Cardiac septum (tissue), 1 donor: ENCODE measurements at regions of chr6 and their contacts with region 1.

Region 1: GRCh38 chr6:142845624-142846458 is 99.1 kb downstream of the HIVEP2 start:
- DNase-seq: peak; percentile 93

Region 2: GRCh38 chr6:142871910-142872331 is 26.1 kb after region 1 on chr6:
- intact Hi-C with region 1: loop called (anchors 2 kb)
- DNase-seq: no peak

Region 3: DNA sequence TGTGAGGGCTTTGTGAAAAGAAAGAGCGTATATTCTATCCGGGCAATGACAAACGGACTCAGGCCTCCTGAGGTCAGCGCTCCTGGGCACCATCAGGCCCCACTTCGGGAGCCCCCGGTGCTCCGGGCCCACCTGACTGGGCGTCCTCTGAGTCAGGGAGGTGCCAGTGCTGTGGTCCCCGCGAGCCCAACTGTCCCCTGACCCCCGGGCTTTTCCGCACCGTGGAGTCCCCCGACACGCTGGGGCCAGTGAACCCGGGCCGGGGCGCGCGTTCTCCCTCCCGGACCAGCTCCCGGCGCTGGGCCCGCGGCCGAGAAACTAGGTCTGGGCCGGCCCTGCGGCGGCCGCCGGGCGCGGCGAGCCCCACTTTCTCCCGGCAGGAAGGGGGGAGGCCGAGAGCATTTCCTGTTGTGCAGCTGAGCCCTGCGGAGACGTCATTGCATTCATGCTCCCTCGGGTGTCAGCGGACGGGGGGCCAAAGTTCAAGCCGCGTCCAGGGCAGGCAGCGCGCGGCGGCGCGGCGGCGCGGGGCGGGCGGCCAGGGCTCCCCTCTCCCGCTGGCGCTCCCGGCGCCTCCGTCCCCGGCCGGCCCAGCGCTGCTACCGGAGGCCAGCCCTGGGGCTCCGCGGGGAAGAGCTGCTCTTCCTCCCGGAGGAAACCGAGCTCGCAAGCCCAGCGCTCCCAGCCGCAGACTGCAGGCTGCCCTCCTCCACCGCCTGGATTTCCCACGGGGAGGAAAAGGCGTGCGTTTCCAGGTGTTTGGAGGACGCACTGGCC is 80.8 kb after region 1 on chr6:
- intact Hi-C with region 1: loop called (anchors 5 kb)
- DNase-seq: peak; percentile 94